ENCODE measurements at regions of chr1 and their contacts with region 1.

Region 1: GRCh38 chr1:156838981-156839410 is 19.9 kb downstream of the INSRR start:
- DNase-seq: peak; percentile 59
- H3K4me3 Mint-ChIP-seq: no peak overlapping the region
- H3K27ac Mint-ChIP-seq: no peak overlapping the region
- H3K4me1 Mint-ChIP-seq: peaks cover 42% of the 10 kb centered on the region
- H3K27me3 Mint-ChIP-seq: peaks cover 51% of the 10 kb centered on the region

Region 2: GRCh38 chr1:156571949-156572662 is 266.9 kb before region 1 on chr1 and contains the start of gene IQGAP3:
- CTCF ChIA-PET with region 1: no interaction called
- POLR2A ChIA-PET with region 1: no interaction called
- intact Hi-C with region 1: no loop called
- DNase-seq: peak; percentile 82
- H3K4me3 Mint-ChIP-seq: peak within 1 kb of the TSS; percentile 95
- H3K27ac Mint-ChIP-seq: no peak within 1 kb of the TSS
- H3K4me1 Mint-ChIP-seq: peaks cover 18% of the 10 kb centered on the region
- H3K27me3 Mint-ChIP-seq: peaks cover 25% of the 10 kb centered on the region
- total RNA-seq, gene IQGAP3: 16.9 to 19.3 TPM

Region 3: GRCh38 chr1:156797212-156797871 is 41.7 kb before region 1 on chr1:
- CTCF ChIA-PET with region 1: interaction called, 49 read pairs
- POLR2A ChIA-PET with region 1: no interaction called
- intact Hi-C with region 1: loop called (anchors 1 kb)
- DNase-seq: peak; percentile 71
- H3K4me3 Mint-ChIP-seq: no peak overlapping the region
- H3K27ac Mint-ChIP-seq: no peak overlapping the region
- H3K4me1 Mint-ChIP-seq: peaks cover 21% of the 10 kb centered on the region
- H3K27me3 Mint-ChIP-seq: no peaks in the 10 kb centered on the region

Region 4: GRCh38 chr1:156813750-156814570 is 25.0 kb before region 1 on chr1:
- CTCF ChIA-PET with region 1: interaction called, 28 read pairs
- POLR2A ChIA-PET with region 1: interaction called, 4 read pairs
- intact Hi-C with region 1: loop called (anchors 1 kb)
- DNase-seq: peak; percentile 81
- H3K4me3 Mint-ChIP-seq: peak overlapping the region; percentile 96
- H3K27ac Mint-ChIP-seq: peak overlapping the region; percentile 99
- H3K4me1 Mint-ChIP-seq: peaks cover 59% of the 10 kb centered on the region
- H3K27me3 Mint-ChIP-seq: no peaks in the 10 kb centered on the region

Region 5: GRCh38 chr1:156828400-156829124 is 10.4 kb before region 1 on chr1:
- CTCF ChIA-PET with region 1: interaction called, 38 read pairs
- POLR2A ChIA-PET with region 1: interaction called, 3 read pairs
- intact Hi-C with region 1: no loop called
- DNase-seq: no peak
- H3K4me3 Mint-ChIP-seq: no peak overlapping the region
- H3K27ac Mint-ChIP-seq: no peak overlapping the region
- H3K4me1 Mint-ChIP-seq: no peaks in the 10 kb centered on the region
- H3K27me3 Mint-ChIP-seq: no peaks in the 10 kb centered on the region

Region 6: DNA sequence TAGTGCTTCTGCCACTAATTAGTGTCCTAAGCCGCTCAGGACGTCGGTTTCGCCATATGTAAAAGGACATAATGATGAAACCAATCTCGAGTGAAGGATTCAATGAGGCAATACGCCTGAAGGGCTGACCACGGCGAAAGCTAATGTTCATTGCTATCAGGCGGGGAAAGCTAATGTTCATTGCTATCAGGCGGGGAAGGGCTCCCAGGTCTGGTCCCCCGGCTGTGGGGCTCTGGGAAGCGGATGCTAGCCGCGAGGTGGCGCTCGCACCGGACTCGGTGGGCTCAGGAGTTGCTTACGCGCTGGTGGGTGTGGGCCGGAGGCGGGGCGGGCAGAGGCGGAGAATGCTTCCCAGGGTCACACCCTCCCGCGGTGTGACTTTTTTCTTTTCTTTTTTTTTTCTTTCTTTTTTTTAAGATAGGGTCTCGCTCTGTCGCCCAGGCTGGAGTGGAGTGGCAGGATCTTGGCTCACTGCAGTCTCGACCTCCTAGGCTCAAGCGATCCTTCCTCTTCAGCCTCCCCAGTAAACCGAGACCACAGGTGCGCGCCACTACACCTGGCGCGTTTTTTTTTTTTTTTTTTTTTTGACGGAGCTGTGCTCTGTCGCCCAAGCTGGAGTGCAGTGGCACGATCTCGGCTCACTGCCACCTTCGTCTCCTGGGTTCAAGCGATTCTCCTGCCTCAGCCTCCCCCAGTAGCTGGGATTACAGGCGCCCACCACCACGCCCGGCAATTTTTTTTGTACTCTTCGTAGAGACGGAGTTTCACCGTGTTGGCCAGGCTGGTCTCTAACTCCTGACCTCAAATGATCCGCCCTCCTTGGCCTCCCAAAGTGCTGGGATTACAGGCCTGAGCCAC is 53.4 kb after region 1 on chr1:
- CTCF ChIA-PET with region 1: interaction called, 137 read pairs
- POLR2A ChIA-PET with region 1: no interaction called
- intact Hi-C with region 1: loop called (anchors 1 kb)
- DNase-seq: peak; percentile 92
- H3K4me3 Mint-ChIP-seq: peak overlapping the region; percentile 48
- H3K27ac Mint-ChIP-seq: no peak overlapping the region
- H3K4me1 Mint-ChIP-seq: peaks cover 10% of the 10 kb centered on the region
- H3K27me3 Mint-ChIP-seq: peaks cover 46% of the 10 kb centered on the region